ENCODE measurements at regions of chr1 and their contacts with region 1.

Region 1: GRCh38 chr1:232477728-232478127 is 152.2 kb downstream of the SIPA1L2 start:
- DNase-seq: peak; percentile 99
- ATAC-seq: peak; percentile 87
- H3K4me3 ChIP-seq: no peak overlapping the region
- H3K27ac ChIP-seq: peak overlapping the region; percentile 83
- H3K4me1 ChIP-seq: peaks cover 32% of the 10 kb centered on the region
- H3K27me3 ChIP-seq: no peaks in the 10 kb centered on the region
- CTCF ChIP-seq: no peak

Region 2: DNA sequence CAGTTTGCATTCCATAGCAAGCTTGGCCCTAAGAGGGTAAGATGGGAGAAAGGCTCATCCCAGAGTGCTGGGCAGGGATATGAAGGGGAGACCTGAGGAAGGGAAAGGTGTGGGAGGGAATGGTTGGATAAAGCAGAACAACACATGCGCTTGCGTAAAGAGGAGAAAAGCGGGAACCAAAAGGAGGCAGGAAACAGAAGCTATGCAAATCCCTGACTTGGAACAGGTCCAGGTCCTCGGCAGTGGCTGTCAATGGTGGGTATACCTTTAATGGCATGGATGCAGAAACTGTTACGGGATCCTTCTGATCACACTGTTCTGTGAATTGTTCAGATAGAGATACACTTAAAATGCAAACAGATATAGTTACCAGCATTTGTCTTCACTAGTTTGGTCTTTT is 303.4 kb before region 1 on chr1:
- CTCF ChIA-PET with region 1: no interaction called
- POLR2A ChIA-PET with region 1: no interaction called
- intact Hi-C with region 1: loop called (anchors 5 kb)
- DNase-seq: no peak
- ATAC-seq: no peak
- H3K4me3 ChIP-seq: no peak overlapping the region
- H3K27ac ChIP-seq: no peak overlapping the region
- H3K4me1 ChIP-seq: no peaks in the 10 kb centered on the region
- H3K27me3 ChIP-seq: no peaks in the 10 kb centered on the region
- CTCF ChIP-seq: no peak

Region 3: DNA sequence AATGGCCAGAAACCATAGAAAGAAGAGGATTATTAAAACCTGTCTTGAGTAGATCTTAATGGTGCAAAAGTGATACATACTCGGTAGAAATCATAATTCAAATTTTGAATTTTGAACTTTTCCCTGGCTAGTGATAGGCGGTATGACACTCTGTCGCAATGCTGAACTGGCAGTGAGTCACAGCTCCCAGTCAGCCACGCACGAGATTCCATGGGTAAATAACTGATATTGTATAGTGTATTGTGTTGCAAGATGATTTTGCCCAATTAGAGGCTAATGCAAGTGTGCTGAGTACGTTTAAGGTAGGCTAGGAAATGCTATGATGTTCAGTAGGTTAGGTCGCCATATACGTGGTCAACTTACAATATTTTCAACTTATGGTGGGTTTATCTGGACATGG is 54.8 kb before region 1 on chr1:
- CTCF ChIA-PET with region 1: no interaction called
- POLR2A ChIA-PET with region 1: no interaction called
- intact Hi-C with region 1: loop called (anchors 1 kb)
- DNase-seq: peak; percentile 76
- ATAC-seq: peak; percentile 32
- H3K4me3 ChIP-seq: peak overlapping the region; percentile 5; the same call in 1 of the 2 replicates
- H3K27ac ChIP-seq: peak overlapping the region; percentile 86
- H3K4me1 ChIP-seq: peaks cover 49% of the 10 kb centered on the region
- H3K27me3 ChIP-seq: no peaks in the 10 kb centered on the region
- CTCF ChIP-seq: no peak

Region 4: GRCh38 chr1:232511172-232511571 is 33.4 kb after region 1 on chr1:
- CTCF ChIA-PET with region 1: no interaction called
- POLR2A ChIA-PET with region 1: no interaction called
- intact Hi-C with region 1: loop called (anchors 2 kb)
- DNase-seq: peak; percentile 52
- ATAC-seq: peak; percentile 56
- H3K4me3 ChIP-seq: peak overlapping the region; percentile 7; the same call in 1 of the 2 replicates
- H3K27ac ChIP-seq: peak overlapping the region; percentile 74
- H3K4me1 ChIP-seq: peaks cover 18% of the 10 kb centered on the region
- H3K27me3 ChIP-seq: no peaks in the 10 kb centered on the region
- CTCF ChIP-seq: no peak

Region 5: GRCh38 chr1:232751393-232752140 is 273.8 kb after region 1 on chr1:
- CTCF ChIA-PET with region 1: no interaction called
- POLR2A ChIA-PET with region 1: no interaction called
- intact Hi-C with region 1: no loop called
- DNase-seq: no peak
- ATAC-seq: no peak
- H3K4me3 ChIP-seq: no peak overlapping the region
- H3K27ac ChIP-seq: no peak overlapping the region
- H3K4me1 ChIP-seq: no peaks in the 10 kb centered on the region
- H3K27me3 ChIP-seq: no peaks in the 10 kb centered on the region
- CTCF ChIP-seq: no peak